Activated naive CD4-positive, alpha-beta T cell treated with anti-CD3 and anti-CD28 coated beads for 36 hours (primary cell): ENCODE measurements at regions of chr2 and their contacts with region 1.

Region 1: GRCh38 chr2:33372940-33373553 is 103.4 kb upstream of the RASGRP3 start:
- DNase-seq: peak; percentile 43
- H3K4me3 Mint-ChIP-seq: no peak overlapping the region
- H3K27ac Mint-ChIP-seq: no peak overlapping the region
- H3K4me1 Mint-ChIP-seq: no peaks in the 10 kb centered on the region
- H3K27me3 Mint-ChIP-seq: no peaks in the 10 kb centered on the region

Region 2: DNA sequence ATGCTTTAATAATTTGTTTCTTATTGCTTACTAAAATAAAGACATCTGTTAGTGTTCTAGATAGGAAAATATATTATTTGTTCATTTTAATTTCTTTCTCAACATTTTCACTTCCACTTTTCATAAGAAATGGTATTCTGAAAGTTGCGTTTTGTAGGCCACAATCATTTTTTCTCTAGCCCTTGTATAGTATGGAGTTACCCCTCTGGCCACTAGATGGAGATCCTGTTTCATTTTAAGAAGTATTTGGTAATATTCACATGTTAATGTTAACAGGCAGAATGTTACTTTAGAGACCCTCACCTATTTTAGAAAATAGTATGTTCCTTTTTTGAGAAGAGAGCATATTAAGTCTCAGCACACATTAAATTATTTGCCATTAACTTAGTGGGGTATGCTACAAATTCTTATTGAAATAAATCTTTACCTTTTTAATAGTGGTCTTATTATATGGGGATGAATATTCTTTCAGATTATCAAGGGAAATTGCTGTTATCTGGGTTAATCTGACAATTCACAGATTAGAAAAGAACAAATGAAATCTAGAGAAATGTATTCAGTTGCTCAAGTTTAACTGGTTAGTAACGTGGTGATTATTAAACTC is 819.1 kb before region 1 on chr2:
- CTCF ChIA-PET with region 1: no interaction called
- intact Hi-C with region 1: loop called (anchors 5 kb)
- DNase-seq: no peak
- H3K4me3 Mint-ChIP-seq: no peak overlapping the region
- H3K27ac Mint-ChIP-seq: no peak overlapping the region
- H3K4me1 Mint-ChIP-seq: no peaks in the 10 kb centered on the region
- H3K27me3 Mint-ChIP-seq: no peaks in the 10 kb centered on the region

Region 3: DNA sequence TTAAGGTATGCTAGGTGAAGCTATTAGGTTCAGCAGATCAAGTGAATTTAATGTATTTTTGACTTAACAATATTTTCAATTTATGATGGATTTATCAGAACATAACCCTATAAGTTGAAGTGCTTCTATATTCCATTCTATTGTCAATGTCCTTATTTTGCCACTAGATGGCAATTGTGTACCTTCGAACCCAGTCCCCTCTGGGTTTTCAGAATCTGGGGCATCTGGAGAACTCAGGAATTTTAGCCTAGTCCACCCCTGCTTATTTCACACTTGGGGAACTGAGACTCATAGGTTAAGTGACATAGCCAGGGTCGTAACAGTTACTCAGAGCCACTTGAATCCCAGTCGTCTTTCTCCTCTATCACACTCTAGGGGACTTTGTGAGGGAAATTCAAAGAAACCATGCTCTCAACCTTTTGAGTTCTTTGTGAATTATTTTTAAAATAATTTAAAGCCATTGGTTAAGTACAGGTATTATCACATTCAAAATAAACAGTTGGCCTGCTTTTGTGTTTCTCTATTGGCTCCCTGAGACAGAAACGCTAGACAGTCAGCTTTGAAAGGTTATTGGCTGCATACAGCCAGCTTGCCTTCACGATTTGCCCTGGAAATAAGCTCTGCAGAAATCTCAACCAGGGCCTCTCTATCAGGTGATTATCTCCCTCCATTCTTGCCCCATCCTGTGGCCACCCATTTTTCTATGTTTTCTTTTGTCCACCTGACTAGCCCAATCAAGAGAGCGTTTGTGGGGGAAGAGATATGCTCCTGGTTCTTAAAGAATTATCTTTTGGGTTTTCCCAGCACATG is 600.2 kb before region 1 on chr2:
- CTCF ChIA-PET with region 1: no interaction called
- intact Hi-C with region 1: loop called (anchors 5 kb)
- DNase-seq: no peak
- H3K4me3 Mint-ChIP-seq: no peak overlapping the region
- H3K27ac Mint-ChIP-seq: no peak overlapping the region
- H3K4me1 Mint-ChIP-seq: peaks cover 4% of the 10 kb centered on the region
- H3K27me3 Mint-ChIP-seq: no peaks in the 10 kb centered on the region

Region 4: GRCh38 chr2:32946314-32947075 is 426.6 kb before region 1 on chr2 and contains the start of gene LTBP1:
- CTCF ChIA-PET with region 1: no interaction called
- intact Hi-C with region 1: loop called (anchors 1 kb)
- DNase-seq: peak; percentile 67
- H3K4me3 Mint-ChIP-seq: peak within 1 kb of the TSS; percentile 74
- H3K27ac Mint-ChIP-seq: no peak within 1 kb of the TSS
- H3K4me1 Mint-ChIP-seq: no peaks in the 10 kb centered on the region
- H3K27me3 Mint-ChIP-seq: peaks cover 24% of the 10 kb centered on the region
- total RNA-seq, gene LTBP1: 0.10 to 0.14 TPM

Region 5: GRCh38 chr2:33033606-33034081 is 339.4 kb before region 1 on chr2:
- CTCF ChIA-PET with region 1: interaction called, 6 read pairs
- intact Hi-C with region 1: loop called (anchors 1 kb)
- DNase-seq: no peak
- H3K4me3 Mint-ChIP-seq: no peak overlapping the region
- H3K27ac Mint-ChIP-seq: no peak overlapping the region
- H3K4me1 Mint-ChIP-seq: no peaks in the 10 kb centered on the region
- H3K27me3 Mint-ChIP-seq: peaks cover 8% of the 10 kb centered on the region

Region 6: DNA sequence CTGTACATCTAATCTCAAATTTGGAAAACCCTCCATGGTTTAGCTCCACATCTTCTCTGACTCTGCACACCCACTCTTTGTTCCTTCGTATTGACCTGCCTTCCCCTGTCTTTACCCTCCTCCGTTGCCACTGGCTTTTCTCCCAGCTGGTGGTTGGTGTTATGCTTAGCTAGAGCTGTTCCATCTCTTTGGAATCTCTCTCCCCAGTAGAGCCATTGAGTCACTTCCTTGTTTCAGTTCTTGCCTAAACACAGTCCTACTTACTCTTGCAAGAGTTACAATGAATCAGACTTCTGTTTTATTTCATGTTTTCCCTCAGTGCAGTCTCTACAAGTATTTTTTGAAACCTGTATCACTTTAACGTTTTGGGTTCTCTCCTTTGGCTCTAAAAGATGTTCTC is 162.4 kb before region 1 on chr2:
- CTCF ChIA-PET with region 1: interaction called, 6 read pairs
- intact Hi-C with region 1: loop called (anchors 1 kb)
- DNase-seq: no peak
- H3K4me3 Mint-ChIP-seq: no peak overlapping the region
- H3K27ac Mint-ChIP-seq: no peak overlapping the region
- H3K4me1 Mint-ChIP-seq: no peaks in the 10 kb centered on the region
- H3K27me3 Mint-ChIP-seq: peaks cover 4% of the 10 kb centered on the region

Region 7: GRCh38 chr2:33250417-33251029 is 122.5 kb before region 1 on chr2:
- CTCF ChIA-PET with region 1: no interaction called
- intact Hi-C with region 1: no loop called
- DNase-seq: no peak
- H3K4me3 Mint-ChIP-seq: no peak overlapping the region
- H3K27ac Mint-ChIP-seq: no peak overlapping the region
- H3K4me1 Mint-ChIP-seq: no peaks in the 10 kb centered on the region
- H3K27me3 Mint-ChIP-seq: no peaks in the 10 kb centered on the region